Left colon (tissue), 2 donors: ENCODE measurements at regions of chr1 and their contacts with region 1.

Region 1: GRCh38 chr1:64136752-64137411 is 66.5 kb upstream of the UBE2U start:
- DNase-seq: peak; percentile 58 to 82
- ATAC-seq: peak; percentile 81

Region 2: DNA sequence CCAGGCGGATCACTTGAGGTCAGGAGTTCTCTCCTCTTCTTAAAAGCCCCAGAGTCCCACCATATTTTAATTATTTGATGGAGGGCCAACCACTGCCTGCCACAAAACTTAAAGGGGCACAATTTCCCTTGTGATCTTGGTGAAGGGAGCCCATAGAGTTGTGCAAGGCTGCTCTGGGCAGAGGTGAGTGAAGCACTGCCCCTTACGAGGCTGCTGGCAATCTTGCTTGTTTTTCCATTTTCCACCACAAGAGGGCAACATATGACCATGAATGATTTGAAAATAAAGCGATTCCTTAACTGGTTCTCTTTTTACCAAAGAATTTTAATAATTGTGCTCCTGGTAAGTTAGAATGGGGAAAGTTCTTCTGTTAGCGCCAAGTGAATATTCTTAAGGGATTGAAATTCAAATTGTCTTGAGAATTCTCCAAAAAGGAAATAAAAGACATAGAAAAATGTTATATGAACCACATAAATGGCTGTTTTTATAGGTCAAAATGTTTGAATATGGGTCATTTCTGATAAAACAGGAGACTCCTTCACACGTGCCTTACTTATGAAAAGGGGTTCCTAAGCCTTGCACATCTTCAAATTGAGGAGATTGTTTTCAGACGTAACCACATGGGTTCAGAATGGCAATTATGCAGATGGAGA is 521.0 kb before region 1 on chr1:
- intact Hi-C with region 1: loop called in 1 of 2 experiments (anchors 5 kb)
- DNase-seq: peak; percentile 28 to 40
- ATAC-seq: peak; percentile 70

Region 3: GRCh38 chr1:63691701-63692425 is 445.0 kb before region 1 on chr1:
- intact Hi-C with region 1: loop called in 1 of 2 experiments (anchors 5 kb)
- DNase-seq: peak; percentile 40 to 57
- ATAC-seq: peak; percentile 95

Region 4: DNA sequence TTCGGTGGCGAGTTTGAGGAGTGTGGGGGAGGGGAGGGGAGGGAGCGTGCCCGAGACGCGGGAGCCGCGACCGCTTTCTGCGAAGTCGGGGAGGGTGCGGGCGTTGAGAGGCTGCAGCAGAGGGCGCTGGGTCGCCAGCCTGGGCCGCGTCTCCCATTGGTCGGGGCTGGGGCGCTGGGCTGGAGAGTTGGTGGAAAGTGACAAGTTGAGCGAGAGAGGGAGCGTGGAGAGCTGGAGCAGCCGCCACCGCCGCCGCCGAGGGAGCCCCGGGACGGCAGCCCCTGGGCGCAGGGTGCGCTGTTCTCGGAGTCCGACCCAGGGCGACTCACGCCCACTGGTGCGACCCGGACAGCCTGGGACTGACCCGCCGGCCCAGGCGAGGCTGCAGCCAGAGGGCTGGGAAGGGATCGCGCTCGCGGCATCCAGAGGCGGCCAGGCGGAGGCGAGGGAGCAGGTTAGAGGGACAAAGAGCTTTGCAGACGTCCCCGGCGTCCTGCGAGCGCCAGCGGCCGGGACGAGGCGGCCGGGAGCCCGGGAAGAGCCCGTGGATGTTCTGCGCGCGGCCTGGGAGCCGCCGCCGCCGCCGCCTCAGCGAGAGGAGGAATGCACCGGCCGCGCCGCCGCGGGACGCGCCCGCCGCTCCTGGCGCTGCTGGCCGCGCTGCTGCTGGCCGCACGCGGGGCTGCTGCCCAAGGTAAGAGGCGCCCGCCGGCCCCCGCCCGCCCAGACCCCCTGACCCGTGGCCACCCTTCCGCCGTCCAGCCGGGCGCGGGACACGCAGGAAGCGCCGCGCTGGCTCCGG is 362.9 kb before region 1 on chr1 and contains the start of gene ROR1:
- intact Hi-C with region 1: loop called in 1 of 2 experiments (anchors 10 kb)
- DNase-seq: peak; percentile 87
- ATAC-seq: peak; percentile 96
- total RNA-seq, gene ROR1: 5.1 to 7.1 TPM

Region 5: DNA sequence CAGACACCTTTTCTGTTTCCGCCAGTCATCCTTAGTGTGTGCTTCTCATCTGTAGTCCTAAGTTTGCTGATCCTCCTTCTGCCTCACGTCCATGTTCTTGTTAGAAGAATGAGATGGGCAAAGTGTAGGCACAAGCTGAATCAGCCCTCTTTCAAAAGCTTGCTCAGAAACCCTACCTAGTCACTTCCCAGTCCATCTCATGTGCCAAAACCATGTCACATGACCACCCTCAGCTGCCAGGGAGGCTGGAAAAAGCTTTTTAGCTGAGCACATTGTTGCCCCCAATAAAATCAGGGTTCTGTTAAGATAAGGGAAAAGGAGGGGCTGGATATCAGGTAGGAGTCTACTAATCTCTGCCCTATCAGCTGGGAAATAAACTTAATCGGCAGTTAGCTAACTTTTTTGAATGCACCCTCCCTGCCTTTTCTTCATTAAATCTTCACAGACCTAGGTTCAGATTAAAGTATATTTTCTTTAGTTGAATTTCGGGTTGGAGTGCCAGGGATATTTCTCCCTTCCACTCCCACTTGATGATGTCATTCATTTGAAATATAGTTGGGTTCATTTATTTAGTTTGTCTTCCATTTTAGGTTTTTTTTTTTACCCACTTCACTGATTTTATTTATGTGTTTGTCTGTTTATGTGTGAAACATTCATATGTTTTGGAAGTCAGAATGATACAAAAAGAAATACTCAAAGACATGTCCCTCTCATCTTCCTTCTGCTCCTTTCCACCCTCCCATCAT is 233.9 kb before region 1 on chr1:
- intact Hi-C with region 1: no loop called
- DNase-seq: no peak
- ATAC-seq: peak; percentile 62

Region 6: DNA sequence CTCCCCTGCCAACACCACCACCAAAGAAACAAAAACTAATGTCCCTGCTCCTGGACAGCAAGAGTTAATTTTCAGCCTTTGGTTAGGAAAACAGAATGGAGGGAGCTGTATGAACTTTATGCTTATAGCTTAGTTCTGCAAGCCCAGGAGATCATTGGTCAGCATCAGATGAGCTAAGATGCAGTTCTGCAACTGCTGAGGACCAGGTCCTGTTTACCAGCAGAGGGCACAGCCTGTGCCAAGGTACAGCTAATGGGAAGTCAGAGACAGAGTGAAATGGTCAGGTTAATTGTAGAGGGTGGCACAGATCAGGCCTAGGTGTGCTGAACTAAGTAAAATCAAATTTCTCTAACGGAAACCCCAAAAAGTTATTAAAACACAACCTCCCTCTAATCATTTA is 201.7 kb before region 1 on chr1:
- intact Hi-C with region 1: loop called in 1 of 2 experiments (anchors 10 kb)
- DNase-seq: no peak
- ATAC-seq: peak; percentile 66

Region 7: DNA sequence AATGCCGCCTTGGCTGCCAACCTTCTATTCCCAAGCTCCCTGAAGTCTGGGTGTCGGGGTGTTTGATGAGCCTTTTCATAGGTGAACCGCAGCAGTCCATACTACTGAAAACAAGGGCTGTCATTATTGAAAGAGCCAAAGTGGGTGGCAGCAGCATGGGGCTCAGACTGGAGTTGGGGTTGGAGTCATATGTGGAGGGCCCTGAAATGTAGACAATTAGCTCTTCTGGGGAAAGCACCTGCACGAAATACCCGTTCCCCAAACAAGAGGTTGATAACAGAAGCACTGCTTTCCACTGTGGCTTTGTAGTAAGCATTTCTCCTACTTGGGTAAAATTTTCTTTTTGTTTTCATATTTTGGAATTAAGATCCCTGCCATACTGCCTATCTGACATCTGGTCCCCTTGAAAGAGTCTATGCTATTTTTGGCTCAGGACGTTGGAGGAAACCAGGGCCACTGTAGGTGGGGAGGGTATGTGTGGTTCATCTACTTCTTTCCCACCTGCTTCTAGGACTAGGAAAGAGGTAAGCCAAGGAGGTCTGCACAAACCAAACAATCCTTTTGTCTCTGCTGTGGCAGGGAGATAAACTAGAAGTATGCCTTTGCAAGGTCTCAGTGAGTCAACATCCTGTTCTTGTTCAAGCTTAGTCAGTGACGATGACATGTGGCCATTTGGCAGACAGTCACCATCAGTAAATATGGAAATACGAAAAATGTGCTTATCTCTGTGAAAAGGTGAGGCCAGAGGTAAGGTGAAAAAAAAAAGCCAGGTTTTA is 130.4 kb before region 1 on chr1:
- intact Hi-C with region 1: no loop called
- DNase-seq: no peak
- ATAC-seq: peak; percentile 44

Region 8: DNA sequence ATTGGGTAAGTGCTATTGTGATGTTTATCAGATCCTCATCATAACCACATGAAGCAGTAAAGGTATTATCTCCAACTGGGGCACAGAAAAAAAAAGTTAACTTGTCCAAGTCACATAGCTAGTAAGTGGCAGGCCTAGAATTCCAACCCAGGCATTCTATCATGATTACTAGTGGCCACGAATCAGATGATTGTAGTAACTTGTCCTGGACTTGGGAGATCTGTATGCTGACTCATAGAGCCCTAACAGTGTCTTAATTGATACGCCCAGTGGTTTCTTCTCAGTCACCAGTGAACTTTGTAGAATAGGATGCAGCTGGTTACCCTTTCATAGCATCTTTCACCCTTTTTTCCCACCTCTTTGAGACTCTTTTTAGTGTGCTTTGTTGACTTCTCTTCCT is 24.6 kb before region 1 on chr1:
- intact Hi-C with region 1: no loop called
- DNase-seq: no peak
- ATAC-seq: no peak